ENCODE measurements at regions of chr1 and their contacts with region 1.

Region 1: DNA sequence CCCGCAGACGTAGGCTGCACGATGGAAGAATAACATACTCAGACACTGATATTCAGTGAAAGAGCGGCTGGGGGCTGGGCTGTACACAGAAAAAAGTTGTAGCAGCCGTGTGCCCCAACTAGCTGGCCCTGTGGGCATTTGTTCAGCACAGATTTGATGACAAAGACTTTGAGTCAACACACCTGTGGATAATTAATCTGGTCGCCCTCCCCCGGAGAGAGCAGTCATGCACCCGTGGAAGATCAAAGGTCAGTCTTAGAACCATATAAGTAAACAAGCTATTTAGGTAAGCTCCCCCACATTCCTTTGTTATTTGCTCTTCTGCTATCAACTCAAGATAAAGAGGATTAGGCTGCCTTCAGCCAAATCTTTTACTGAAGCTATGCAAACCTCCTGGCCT is 148.4 kb upstream of the HMCN1 start:
- DNase-seq: peak; percentile 83 to 88
- H3K4me3 ChIP-seq: no peak overlapping the region
- H3K4me3 Mint-ChIP-seq: peak overlapping the region; percentile 39
- H3K27ac Mint-ChIP-seq: peak overlapping the region; percentile 83
- H3K4me1 ChIP-seq: peaks cover 21% of the 10 kb centered on the region
- H3K4me1 Mint-ChIP-seq: peaks cover 22% of the 10 kb centered on the region
- H3K27me3 ChIP-seq: no peaks in the 10 kb centered on the region
- H3K27me3 Mint-ChIP-seq: no peaks in the 10 kb centered on the region
- CTCF ChIP-seq: no peak

Region 2: GRCh38 chr1:185541871-185542301 is 43.9 kb before region 1 on chr1:
- CTCF ChIA-PET with region 1: no interaction called
- POLR2A ChIA-PET with region 1: no interaction called
- intact Hi-C with region 1: loop called (anchors 1 kb)
- DNase-seq: peak in 1 of 2 experiments; percentile 40
- H3K4me3 ChIP-seq: no peak overlapping the region
- H3K4me3 Mint-ChIP-seq: peak overlapping the region; percentile 44
- H3K27ac Mint-ChIP-seq: peak overlapping the region; percentile 83
- H3K4me1 ChIP-seq: peaks cover 41% of the 10 kb centered on the region
- H3K4me1 Mint-ChIP-seq: peaks cover 39% of the 10 kb centered on the region
- H3K27me3 ChIP-seq: no peaks in the 10 kb centered on the region
- H3K27me3 Mint-ChIP-seq: no peaks in the 10 kb centered on the region
- CTCF ChIP-seq: no peak

Region 3: DNA sequence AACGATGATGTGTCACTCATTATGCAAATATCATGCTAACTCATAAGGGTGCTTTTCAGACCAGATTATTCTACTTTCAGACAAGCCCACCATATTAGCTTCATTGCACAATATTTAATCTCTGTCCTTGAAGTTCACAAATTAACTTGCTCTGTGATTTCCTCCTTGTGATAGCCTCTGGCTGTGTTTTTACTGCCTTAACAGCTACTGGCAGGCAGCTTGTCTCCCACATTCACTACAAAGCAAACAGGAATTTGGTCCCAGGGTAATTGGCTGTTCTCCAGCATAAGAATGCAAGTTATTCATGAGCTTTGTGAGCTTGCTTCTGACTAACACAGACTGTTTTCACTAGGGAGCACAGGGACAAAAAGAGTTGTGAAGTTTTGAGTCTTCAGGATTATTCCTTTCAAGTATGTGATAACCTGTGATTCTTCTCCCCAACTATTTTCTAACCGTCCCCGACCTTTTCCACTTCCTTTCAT is 60.5 kb after region 1 on chr1:
- CTCF ChIA-PET with region 1: no interaction called
- POLR2A ChIA-PET with region 1: no interaction called
- intact Hi-C with region 1: loop called (anchors 1 kb)
- DNase-seq: peak; percentile 82 to 90
- H3K4me3 ChIP-seq: no peak overlapping the region
- H3K4me3 Mint-ChIP-seq: peak overlapping the region; percentile 48
- H3K27ac Mint-ChIP-seq: peak overlapping the region; percentile 86
- H3K4me1 ChIP-seq: peaks cover 37% of the 10 kb centered on the region
- H3K4me1 Mint-ChIP-seq: peaks cover 25% of the 10 kb centered on the region
- H3K27me3 ChIP-seq: no peaks in the 10 kb centered on the region
- H3K27me3 Mint-ChIP-seq: no peaks in the 10 kb centered on the region
- CTCF ChIP-seq: no peak